ENCODE measurements at regions of chr17 and their contacts with region 1.

Region 1: GRCh38 chr17:57552114-57552624 is 192.9 kb downstream of the CCDC182 start:
- DNase-seq: peak; percentile 80
- CTCF ChIP-seq: peak; percentile 78

Region 2: GRCh38 chr17:57511430-57512123 is 40.6 kb before region 1 on chr17:
- CTCF ChIA-PET with region 1: no interaction called
- POLR2A ChIA-PET with region 1: no interaction called
- DNase-seq: no peak
- CTCF ChIP-seq: no peak

Region 3: DNA sequence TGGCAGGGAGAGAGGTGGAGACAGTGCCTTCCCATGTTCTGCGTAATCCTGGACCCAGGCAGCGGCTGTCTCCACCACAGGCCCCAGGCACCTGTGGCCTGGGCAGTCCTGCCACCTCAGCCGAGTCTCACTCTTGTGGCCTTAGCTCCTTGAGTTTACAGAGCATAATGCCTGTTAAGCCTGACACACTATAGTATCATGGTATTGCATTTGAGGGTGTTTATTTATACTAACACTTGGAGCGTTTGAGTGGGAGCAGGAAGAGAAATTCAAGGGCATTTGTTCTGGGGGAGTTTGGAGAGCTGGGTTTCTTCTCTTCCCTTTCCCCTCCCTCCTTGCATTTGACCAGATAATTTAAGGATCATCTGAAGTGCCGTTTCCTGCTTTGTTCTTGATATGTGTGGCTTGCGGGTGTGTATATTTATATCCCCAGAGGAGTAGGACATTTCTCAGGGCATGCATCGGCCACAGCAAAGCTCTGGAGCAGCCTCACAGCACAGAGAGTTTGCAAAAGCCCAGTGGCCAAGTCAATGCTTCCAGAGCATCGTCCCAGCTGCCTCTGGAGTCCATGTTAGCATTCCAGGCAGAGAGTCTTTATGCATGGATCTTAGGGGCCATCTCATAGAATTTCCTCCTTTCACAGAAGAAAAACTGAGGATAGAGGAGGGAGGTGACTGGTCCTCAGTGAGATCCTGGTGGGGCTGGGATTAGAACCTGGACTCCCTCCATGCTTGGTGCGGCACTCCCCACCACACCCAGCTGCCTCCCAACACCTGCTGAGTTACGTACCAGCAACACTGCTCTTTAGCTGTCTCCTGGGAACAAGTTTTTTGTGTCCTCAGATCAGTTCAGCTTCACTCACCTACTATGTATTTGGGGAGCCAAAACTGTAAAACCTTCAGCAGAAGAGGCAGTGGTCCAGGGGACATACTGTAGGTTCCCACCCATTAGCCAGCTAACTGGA is 29.8 kb before region 1 on chr17:
- CTCF ChIA-PET with region 1: interaction called, 16 read pairs
- POLR2A ChIA-PET with region 1: no interaction called
- DNase-seq: no peak
- CTCF ChIP-seq: no peak

Region 4: GRCh38 chr17:57535249-57535966 is 16.8 kb before region 1 on chr17:
- CTCF ChIA-PET with region 1: interaction called, 11 read pairs
- POLR2A ChIA-PET with region 1: no interaction called
- DNase-seq: no peak
- CTCF ChIP-seq: no peak

Region 5: DNA sequence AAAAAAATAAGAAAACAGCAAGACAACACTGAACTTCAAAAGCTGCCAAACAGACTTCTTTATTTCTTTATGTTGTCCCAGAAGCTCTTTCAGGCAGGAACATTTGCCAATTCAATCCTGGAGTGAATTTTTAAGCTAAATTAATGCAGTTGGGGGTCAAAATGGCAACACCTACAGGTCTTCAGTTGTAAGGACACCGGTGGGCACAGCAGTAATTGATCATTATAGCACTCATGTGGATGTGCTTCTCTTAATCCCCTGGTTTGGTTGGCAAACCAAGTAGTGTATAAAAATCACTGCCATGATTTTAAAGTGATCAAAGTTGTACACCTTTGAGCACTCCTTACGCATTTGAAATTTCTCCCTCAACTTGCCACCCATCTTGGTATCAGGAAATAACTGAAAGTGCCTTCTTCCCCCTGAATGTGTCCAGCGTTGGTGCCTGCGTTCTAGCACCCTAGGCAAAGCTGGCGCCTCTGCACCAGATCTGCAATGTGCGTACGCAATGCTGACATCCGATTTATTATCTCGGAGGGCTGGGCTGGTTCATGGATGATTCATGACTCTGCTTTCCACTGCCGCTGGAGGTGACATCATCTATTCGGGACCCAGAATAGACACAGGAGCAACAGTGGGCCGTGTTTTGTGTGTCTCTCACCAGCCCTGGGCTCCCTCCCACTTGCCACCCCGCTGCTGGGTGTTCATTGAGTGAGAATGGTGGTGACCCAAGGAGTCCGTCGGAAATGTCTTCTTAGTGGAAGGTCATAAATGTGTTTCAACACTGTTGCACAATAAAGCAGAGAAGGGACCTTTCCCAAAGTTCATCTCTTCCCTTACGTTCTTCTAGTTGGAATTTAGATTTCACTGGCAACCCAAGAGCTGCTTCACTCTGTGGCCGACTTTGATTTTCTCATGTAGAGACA is 10.4 kb before region 1 on chr17:
- CTCF ChIA-PET with region 1: interaction called, 16 read pairs
- POLR2A ChIA-PET with region 1: no interaction called
- DNase-seq: no peak
- CTCF ChIP-seq: no peak

Region 6: DNA sequence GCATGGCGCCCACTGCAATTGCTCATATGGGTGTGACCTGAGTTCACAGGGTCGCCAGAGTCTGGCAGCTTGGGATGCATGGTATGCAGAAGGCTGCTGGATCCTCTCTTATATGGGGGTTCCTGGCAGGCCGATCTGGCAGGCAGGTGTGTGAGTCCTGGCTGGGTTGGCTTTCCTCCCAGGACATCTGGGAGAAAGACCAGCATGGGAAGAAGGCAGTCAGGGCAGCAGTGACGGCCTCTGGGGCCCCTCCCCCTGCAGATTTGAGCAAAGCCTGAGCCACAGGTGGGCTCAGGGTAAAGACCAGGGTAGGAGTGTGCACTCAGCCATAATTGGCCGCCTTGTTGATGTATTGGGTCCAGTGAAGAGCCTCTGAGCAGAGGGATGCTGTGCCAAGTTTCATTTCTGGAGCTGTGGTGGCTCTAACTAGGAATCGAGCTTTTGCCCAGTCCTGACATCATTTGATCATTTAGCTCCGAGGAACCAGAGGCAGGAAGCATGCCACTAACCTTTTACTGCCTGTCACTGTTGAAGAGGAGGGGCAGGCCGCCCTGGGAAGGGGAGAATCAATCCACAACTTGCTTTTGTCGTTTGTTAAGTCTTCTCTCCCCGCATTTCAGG is 18.7 kb after region 1 on chr17:
- CTCF ChIA-PET with region 1: interaction called, 11 read pairs
- POLR2A ChIA-PET with region 1: no interaction called
- DNase-seq: no peak
- CTCF ChIP-seq: no peak

Measured in GM10248 (cell line).